ENCODE measurements at regions of chr3 and their contacts with region 1.

Region 1: GRCh38 chr3:52934630-52935530 is 37.5 kb upstream of the STIMATE start:
- DNase-seq: peak; percentile 16
- H3K4me3 Mint-ChIP-seq: no peak overlapping the region
- H3K27ac Mint-ChIP-seq: peak overlapping the region; percentile 35
- H3K4me1 Mint-ChIP-seq: peaks cover 9% of the 10 kb centered on the region
- H3K27me3 Mint-ChIP-seq: no peaks in the 10 kb centered on the region

Region 2: DNA sequence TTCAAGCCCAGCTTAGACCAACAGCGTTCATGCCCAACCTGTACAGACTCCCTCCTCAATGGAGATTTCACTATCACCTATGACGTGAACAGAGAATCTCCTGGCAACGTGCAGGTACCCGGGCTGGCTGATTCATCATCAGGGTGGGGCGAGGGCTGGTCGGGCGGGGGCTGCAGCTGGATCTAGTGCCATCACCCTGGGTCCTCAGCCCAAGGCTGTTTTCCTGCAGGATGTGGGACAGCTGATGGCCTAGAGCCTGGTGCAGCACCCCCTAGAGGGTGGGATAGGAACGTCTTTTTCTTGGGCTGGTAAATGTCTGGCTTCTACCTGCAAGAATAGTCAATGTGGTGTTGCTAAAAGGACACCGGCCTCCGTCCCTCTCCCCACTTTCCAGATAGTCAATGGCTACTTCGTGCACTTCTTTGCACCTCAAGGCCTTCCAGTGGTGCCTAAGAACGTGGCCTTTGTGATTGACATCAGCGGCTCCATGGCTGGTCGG is 135.9 kb before region 1 on chr3:
- intact Hi-C with region 1: no loop called
- DNase-seq: no peak
- H3K4me3 Mint-ChIP-seq: no peak overlapping the region
- H3K27ac Mint-ChIP-seq: no peak overlapping the region
- H3K4me1 Mint-ChIP-seq: no peaks in the 10 kb centered on the region
- H3K27me3 Mint-ChIP-seq: peaks cover 3% of the 10 kb centered on the region

Region 3: DNA sequence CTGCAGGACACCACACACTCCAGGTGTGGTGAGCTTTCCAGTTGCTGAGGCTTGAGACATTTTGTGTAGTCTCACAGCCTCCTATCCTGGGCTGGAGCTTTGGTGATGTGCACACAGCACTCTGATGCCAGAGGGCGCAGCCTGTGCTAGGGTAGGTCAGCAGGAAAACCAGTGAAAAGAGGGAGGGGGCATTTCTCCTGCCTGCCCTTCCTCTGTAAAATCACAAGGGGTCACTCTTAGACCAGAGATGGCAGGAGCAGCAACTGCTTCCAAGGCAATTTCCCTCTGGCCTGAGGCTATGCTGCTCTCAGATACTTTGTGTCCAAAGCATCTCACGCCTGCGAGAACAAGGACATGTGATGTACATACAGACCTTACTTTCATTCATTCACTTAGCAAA is 83.5 kb before region 1 on chr3:
- intact Hi-C with region 1: loop called (anchors 1 kb)
- DNase-seq: no peak
- H3K4me3 Mint-ChIP-seq: no peak overlapping the region
- H3K27ac Mint-ChIP-seq: no peak overlapping the region
- H3K4me1 Mint-ChIP-seq: no peaks in the 10 kb centered on the region
- H3K27me3 Mint-ChIP-seq: no peaks in the 10 kb centered on the region

Region 4: DNA sequence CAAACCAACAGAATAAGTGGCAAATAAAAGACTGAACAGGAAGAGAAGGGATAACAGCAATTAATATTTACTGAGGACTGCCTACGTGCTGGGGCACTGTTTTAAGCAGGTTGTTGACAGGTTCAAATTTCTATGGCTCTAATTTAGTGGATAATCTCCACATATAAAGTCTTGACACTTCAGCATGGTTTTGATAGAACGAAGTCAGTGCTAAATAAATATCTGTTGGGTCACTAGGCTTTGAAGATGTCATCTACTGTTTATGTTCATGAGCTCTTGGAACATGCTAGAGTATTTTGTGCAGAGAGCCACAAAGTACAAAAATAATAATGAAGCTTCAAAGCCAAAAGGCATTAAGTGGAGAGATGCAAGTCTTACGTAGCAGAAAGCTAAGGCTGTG is 37.0 kb after region 1 on chr3:
- intact Hi-C with region 1: no loop called
- DNase-seq: no peak
- H3K4me3 Mint-ChIP-seq: no peak overlapping the region
- H3K27ac Mint-ChIP-seq: no peak overlapping the region
- H3K4me1 Mint-ChIP-seq: peaks cover 10% of the 10 kb centered on the region
- H3K27me3 Mint-ChIP-seq: no peaks in the 10 kb centered on the region

Region 5: GRCh38 chr3:52983336-52983807 is 48.5 kb after region 1 on chr3:
- intact Hi-C with region 1: loop called (anchors 1 kb)
- DNase-seq: peak; percentile 64
- H3K4me3 Mint-ChIP-seq: peak overlapping the region; percentile 38
- H3K27ac Mint-ChIP-seq: peak overlapping the region; percentile 85
- H3K4me1 Mint-ChIP-seq: peaks cover 23% of the 10 kb centered on the region
- H3K27me3 Mint-ChIP-seq: no peaks in the 10 kb centered on the region